HAP-1 (cell line): ENCODE measurements at regions of chr3 and their contacts with region 1.

Region 1: DNA sequence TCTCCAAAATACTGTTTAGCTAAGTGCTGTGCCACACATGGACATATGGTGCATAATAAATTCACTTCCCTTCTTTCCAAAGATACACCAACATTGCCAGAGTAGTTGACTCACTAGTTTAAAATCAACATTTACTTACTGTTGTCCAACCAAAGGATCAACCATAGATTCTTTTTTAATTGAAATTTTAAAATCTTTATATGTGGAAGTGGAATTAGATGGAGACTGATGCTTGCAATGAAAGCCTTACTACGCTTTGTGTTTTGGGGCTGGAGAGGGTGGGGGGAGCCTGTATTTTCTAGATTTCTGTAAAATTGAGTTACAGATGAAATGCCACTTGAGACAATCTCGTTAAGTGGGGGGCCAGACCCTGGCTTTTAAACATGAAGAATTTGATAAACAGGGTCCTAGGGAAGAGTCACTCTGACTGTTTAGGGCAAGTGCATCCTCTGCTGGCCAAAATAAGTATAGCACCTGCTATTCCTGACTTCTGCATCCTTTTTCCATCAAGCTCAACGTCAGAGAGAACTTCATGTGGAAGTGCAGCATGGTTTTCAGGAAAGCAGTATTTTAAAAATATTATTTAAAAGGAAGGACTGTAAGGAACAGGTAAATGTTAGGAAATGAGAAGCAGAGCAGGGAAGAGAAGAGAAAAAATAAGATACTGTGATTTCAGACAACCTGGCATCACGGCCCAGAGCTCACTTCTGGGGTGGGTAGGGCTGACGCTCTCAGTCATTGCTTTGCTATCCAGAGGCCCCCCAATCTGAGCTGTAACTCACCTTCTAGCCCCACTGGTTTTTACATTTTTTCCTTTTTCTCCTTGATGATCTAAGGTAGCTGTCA is 76.7 kb downstream of the BOC start:
- DNase-seq: peak; percentile 62 to 83
- H3K4me3 ChIP-seq: no peak overlapping the region
- H3K4me1 ChIP-seq: peaks cover 10% of the 10 kb centered on the region
- H3K27me3 ChIP-seq: no peaks in the 10 kb centered on the region

Region 2: DNA sequence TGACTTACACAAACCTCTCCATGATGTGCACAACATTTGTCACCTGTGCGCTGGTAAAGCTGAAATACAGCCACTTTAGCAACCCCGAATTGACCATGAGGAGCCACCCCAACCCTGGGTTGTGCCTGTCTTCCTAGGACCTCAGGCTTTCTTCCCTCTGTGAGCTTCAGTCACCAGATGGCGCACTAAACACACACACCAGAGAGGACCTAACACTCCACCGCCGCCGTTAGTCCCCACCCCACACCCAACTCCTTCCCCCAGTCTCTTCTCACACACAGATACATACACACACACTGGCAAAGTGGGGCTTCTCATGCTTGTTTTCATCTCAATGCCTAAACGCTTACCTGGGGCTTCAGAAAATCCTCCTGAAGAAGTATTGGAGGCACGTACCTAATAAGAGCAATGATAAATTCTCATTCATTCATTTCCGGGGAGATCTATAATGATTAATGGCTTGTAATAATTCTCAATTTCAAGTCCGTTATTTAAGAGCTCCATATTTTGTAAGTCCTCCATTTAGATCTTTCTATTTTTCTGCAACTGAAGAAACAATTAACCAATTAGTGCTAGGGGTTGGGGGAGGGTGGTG is 645.0 kb before region 1 on chr3:
- in situ Hi-C with region 1: loop called (anchors 25 kb)
- DNase-seq: peak; percentile 86 to 92
- H3K4me3 ChIP-seq: no peak overlapping the region
- H3K4me1 ChIP-seq: peaks cover 26% of the 10 kb centered on the region
- H3K27me3 ChIP-seq: no peaks in the 10 kb centered on the region

Region 3: GRCh38 chr3:113051302-113051711 is 236.7 kb before region 1 on chr3:
- in situ Hi-C with region 1: loop called (anchors 5 kb)
- DNase-seq: peak; percentile 80 to 92
- H3K4me3 ChIP-seq: no peak overlapping the region
- H3K4me1 ChIP-seq: peaks cover 7% of the 10 kb centered on the region
- H3K27me3 ChIP-seq: no peaks in the 10 kb centered on the region

Region 4: DNA sequence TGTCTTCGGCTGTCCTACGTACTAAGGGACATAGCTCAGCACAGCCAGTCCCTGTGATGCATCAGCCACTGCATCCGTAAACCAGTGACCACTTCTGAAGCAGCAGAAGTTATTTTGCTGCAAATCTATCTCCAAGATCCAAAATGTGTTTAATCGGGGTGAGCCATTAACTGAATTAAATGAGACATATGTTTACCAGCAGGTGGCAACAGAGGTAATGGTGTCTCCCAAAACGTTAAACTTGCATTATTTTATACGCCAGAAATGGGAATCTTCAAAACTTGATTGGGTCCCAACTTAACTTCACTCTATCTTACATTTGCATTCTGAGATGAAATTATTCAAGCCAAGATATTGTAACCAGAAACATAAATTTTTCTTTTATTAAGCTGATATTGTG is 152.0 kb before region 1 on chr3:
- in situ Hi-C with region 1: loop called (anchors 10 kb)
- DNase-seq: peak in 1 of 2 experiments; percentile 56
- H3K4me3 ChIP-seq: no peak overlapping the region
- H3K4me1 ChIP-seq: peaks cover 11% of the 10 kb centered on the region
- H3K27me3 ChIP-seq: no peaks in the 10 kb centered on the region

Region 5: DNA sequence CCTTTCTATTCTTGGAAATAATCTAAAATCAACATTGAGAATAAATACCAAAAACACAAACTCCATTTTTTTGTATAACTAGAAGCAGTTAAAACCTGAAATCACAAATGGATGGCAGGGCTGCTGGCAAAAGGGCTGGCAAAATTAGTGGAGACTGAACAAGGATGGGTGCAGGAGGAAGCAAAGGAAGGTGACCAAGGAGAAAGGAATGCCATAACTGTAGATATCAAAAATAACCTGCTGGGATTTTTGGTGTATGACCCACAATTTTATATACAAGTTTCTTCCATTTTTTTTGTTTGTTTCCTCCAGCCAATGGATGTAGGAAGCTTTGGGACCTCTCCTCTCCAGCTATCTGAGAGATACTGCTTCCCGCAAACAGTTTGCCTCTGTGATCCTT is 140.6 kb after region 1 on chr3:
- in situ Hi-C with region 1: no loop called
- DNase-seq: no peak
- H3K4me3 ChIP-seq: no peak overlapping the region
- H3K4me1 ChIP-seq: no peaks in the 10 kb centered on the region
- H3K27me3 ChIP-seq: no peaks in the 10 kb centered on the region

Region 6: DNA sequence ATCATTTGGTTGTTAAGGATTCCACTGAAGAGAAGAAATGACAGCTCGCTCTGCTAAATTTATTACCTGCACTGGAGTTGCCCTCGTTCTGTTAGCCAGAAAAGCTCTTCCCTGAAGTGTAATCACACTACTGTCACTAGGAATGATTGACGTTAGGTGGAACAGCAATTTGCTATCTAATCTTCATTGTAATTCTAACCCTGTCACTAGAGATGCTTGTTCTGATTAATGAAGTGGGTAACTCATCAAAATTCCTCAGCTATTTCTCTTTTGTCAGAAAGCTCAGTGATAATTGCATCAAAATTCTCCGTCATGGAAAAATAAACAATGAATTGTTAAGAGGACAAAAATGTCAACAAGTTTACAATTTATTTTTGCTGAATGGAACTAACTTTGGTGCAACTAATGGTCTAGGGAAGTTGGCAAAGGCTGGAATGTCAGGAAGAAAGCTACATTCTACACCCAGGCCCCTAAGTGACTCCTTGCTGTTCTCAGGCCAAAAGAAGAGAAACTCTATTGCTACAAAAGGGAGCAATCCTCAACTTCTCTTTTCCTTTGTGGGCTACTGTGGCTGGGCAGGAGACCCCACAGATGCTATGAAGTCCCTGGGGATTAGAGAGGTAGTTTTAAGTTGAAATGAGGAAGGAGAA is 734.3 kb after region 1 on chr3:
- in situ Hi-C with region 1: no loop called
- DNase-seq: peak in 1 of 2 experiments; percentile 46
- H3K4me3 ChIP-seq: no peak overlapping the region
- H3K4me1 ChIP-seq: no peaks in the 10 kb centered on the region
- H3K27me3 ChIP-seq: no peaks in the 10 kb centered on the region